Body of pancreas (tissue), 4 donors: ENCODE measurements at regions of chr12 and their contacts with region 1.

Region 1: DNA sequence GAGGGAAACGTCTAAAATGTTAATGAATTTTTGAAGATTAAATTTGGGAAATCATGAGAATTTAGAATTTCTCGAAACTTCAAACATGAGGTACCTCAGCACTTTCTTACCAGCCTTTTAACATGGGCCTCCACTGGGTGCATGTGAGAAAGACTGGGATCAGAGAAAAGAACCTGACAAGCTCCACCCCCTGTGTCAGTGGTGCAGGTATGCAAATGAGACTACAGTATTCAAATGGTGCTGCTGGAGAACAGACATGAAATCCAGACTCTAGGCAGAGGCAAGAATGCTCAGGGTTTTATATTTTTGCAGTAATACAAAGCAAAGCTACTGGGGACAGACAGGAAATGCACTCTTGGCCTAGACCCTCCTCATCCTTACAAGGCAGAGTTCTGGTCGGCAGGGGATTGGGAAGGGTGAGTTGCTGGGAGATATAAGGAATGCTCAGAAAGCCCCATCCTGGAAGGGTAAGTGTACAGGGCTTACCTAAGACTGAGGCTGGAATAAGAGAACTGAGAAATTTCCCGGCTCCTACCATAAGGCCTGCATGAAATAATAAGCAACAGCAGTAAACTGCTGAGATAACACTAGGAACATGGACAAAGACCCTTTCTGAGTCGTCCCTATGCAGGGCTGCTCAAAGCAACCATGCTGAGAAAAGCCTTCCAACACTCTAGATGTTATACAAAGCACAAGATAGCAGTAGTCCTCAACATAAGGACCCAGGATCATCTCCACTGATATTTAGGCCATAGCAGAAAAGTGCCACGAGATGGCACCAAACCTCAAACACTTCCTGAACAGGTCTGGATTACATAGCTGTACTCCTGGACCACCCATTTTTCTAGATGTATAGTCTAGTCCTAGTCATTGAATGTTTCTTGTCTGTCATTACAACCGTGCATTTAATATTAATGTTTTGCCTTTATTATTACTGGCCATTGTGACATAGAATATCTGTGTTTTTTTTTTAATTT is 260.8 kb downstream of the RASSF9 start:
- DNase-seq: peak; percentile 50 to 75 (median 59)
- ATAC-seq: peak; percentile 80
- H3K4me3 ChIP-seq: no peak overlapping the region
- H3K27ac ChIP-seq: no peak overlapping the region
- H3K4me1 ChIP-seq: no peaks in the 10 kb centered on the region
- H3K27me3 ChIP-seq: no peaks in the 10 kb centered on the region
- CTCF ChIP-seq: peak; percentile 47 to 82 (median 73)
- POLR2A ChIP-seq: no peak

Region 2: DNA sequence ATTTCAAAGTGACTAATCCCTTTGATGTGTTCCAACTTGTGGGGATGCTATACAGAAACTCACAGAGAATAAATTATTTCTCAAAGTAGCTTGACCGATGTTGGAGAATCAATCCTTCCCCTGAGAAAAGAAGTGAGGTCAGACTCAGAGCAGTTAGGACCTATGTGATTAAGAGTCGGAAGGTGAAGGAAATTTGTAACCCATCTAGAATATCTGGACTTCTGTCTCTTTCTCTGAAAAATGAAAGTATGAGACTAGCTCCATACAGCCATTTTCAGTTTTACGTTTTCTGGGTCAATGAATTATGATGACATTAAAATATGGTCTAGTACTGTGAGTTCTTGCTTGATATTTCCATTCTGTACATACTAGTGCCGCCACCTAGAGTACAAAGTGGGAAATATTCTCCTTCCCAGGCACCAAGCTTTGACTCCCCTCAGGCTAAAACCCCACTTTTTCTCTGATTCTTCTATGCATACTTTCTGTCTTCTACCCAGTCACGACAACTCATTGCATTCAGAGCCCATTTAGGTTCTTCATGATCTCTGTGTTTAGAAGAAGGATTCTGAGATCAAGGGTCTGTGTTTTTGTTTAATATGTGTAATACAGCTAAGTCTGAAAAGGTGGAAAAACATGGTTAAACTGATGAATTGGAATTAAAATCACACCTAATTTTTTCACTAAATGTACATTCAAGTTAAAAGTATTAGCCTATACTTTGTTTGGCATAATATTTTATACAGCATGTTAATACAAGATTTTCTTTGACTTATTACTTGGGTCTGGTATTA is 291.8 kb after region 1 on chr12:
- intact Hi-C with region 1: loop called (anchors 5 kb)
- DNase-seq: peak; percentile 42 to 63 (median 56)
- ATAC-seq: peak; percentile 88
- H3K4me3 ChIP-seq: no peak overlapping the region
- H3K27ac ChIP-seq: no peak overlapping the region
- H3K4me1 ChIP-seq: no peaks in the 10 kb centered on the region
- H3K27me3 ChIP-seq: no peaks in the 10 kb centered on the region
- CTCF ChIP-seq: peak; percentile 65 to 90 (median 87)
- POLR2A ChIP-seq: no peak